GM10248 (cell line): ENCODE measurements at regions of chr12 and their contacts with region 1.

Region 1: DNA sequence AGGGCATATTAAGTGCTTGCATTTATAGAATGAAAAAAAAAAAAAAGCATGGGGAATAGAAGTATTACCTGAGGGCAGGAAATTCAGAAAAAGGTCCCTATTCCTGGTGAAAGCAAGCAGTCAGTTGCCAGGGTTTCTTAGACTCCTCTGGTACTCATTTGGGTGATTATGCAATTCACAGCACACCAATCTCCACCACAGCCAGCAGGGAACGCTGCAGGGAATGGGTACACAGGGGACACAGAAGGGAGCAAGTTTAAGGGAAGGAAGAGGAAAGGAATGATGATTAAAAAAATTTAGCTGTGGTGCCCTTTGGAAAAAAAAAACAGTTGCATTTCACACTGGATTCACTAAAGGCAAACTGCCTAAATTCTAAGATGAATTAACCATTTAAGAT is 14.2 kb downstream of the BLTP3B start:
- DNase-seq: no peak
- CTCF ChIP-seq: no peak

Region 2: GRCh38 chr12:100142851-100143559 is 14.5 kb after region 1 on chr12 and contains the start of gene BLTP3B:
- CTCF ChIA-PET with region 1: interaction called, 35 read pairs
- POLR2A ChIA-PET with region 1: no interaction called
- DNase-seq: peak; percentile 92
- CTCF ChIP-seq: no peak

Region 3: GRCh38 chr12:100267619-100268281 is 139.2 kb after region 1 on chr12:
- CTCF ChIA-PET with region 1: no interaction called
- POLR2A ChIA-PET with region 1: no interaction called
- DNase-seq: no peak
- CTCF ChIP-seq: no peak